GM12878 (cell line): ENCODE measurements at regions of chr5 and their contacts with region 1.

Region 1: GRCh38 chr5:68891718-68892117 is 202.1 kb upstream of the SLC30A5 start:
- DNase-seq: peak; percentile 33
- ATAC-seq: peak; percentile 98
- H3K4me3 ChIP-seq: no peak overlapping the region
- H3K27ac ChIP-seq: no peak overlapping the region
- H3K4me1 ChIP-seq: peaks cover 7% of the 10 kb centered on the region; the same call in 1 of the 2 replicates
- H3K27me3 ChIP-seq: no peaks in the 10 kb centered on the region; a peak in 1 of 4 replicates
- CTCF ChIP-seq: no peak
- EP300 ChIP-seq: peak in 1 of 2 experiments; percentile 29; a peak in 2 of 4 replicates
- POLR2A ChIP-seq: no peak
- RAD21 ChIP-seq: peak; percentile 48

Region 2: GRCh38 chr5:69007726-69008368 is 116.1 kb after region 1 on chr5:
- CTCF ChIA-PET with region 1: interaction called, 3 read pairs
- POLR2A ChIA-PET with region 1: no interaction called
- RAD21 ChIA-PET with region 1: no interaction called
- SMC1A ChIA-PET with region 1: no interaction called
- in situ Hi-C with region 1: no loop called
- intact Hi-C with region 1: loop called (anchors 5 kb)
- DNase-seq: peak; percentile 8
- ATAC-seq: peak; percentile 98
- H3K4me3 ChIP-seq: no peak overlapping the region
- H3K27ac ChIP-seq: no peak overlapping the region
- H3K4me1 ChIP-seq: no peaks in the 10 kb centered on the region
- H3K27me3 ChIP-seq: peaks cover 0 to 2% of the 10 kb centered on the region in 2 experiments; a peak in 3 of 4 replicates
- CTCF ChIP-seq: peak; percentile 94 to 99 (median 94)
- EP300 ChIP-seq: no peak
- POLR2A ChIP-seq: no peak
- RAD21 ChIP-seq: peak; percentile 99